ENCODE measurements at regions of chr7 and their contacts with region 1.

Region 1: DNA sequence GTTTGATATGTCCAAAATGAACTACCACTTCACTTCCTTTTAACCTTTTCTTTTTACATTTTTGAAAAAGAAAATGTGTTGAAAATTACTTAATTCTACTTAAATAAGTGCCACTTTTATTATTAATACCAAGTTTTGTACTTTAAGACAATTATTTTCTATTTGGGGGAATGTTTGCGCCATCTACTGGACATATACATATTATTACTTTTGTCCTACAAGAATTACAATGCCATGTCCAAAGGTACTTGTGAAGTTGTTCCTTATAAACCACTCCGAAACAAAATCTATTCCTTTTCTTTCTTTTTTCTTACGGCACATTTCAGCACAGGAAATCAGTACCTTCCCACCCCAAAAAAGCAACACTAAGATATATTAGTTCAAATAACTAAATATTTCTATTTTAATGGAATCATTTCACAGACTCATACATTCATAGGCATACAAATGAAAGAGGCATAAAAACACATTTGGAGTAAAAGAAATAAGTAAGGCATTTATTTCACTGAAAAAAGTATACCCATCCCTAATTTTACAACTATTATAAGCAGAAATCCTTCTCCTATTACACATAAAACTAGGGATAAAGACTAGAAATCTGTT is 169.9 kb downstream of the RNF133 start:
- DNase-seq: no peak
- H3K4me3 ChIP-seq: no peak overlapping the region
- H3K27ac ChIP-seq: no peak overlapping the region
- H3K4me1 ChIP-seq: peaks cover 0 to 5% of the 10 kb centered on the region in 2 donors
- H3K27me3 ChIP-seq: no peaks in the 10 kb centered on the region
- CTCF ChIP-seq: peak; percentile 37 to 71 (median 52)
- POLR2A ChIP-seq: no peak

Region 2: GRCh38 chr7:122092964-122093797 is 435.8 kb before region 1 on chr7:
- intact Hi-C with region 1: loop called in 1 of 2 experiments (anchors 10 kb)
- DNase-seq: peak; percentile 67 to 93 (median 79)
- H3K4me3 ChIP-seq: no peak overlapping the region
- H3K27ac ChIP-seq: no peak overlapping the region
- H3K4me1 ChIP-seq: peaks cover 0 to 7% of the 10 kb centered on the region in 2 donors
- H3K27me3 ChIP-seq: no peaks in the 10 kb centered on the region
- CTCF ChIP-seq: peak; percentile 58 to 89 (median 70)
- POLR2A ChIP-seq: no peak

Region 3: DNA sequence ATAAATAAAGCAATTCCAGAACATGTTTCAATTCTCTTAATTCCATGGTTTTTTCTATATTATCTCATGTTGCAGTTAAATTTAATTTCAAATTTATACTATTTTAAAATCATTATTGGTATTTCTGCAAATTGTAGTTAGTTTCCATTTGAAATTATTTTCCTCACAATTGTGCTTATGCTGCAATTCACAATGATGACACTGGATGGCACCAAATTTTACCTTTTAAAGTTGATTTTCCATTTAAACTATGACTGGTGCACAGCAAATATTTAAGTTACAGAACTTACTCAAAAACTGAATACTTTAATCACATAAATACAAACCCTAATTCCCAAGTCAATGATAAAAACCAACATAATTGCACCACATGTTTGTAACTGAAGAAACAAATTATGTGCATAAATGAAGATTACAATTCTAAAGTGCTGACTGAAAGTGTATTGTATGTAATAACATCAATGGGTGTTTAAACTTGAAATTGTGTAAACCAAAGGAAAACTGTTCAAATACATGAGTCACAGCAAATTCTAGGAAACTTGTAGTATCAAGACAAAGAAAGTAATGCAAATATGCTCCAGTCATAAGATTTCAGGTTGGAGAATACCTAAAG is 309.6 kb before region 1 on chr7:
- intact Hi-C with region 1: loop called (anchors 5 to 10 kb)
- DNase-seq: no peak
- H3K4me3 ChIP-seq: no peak overlapping the region
- H3K27ac ChIP-seq: no peak overlapping the region
- H3K4me1 ChIP-seq: no peaks in the 10 kb centered on the region
- H3K27me3 ChIP-seq: no peaks in the 10 kb centered on the region
- CTCF ChIP-seq: peak; percentile 51 to 76 (median 69)
- POLR2A ChIP-seq: no peak